ENCODE measurements at regions of chrX and their contacts with region 1.

Region 1: DNA sequence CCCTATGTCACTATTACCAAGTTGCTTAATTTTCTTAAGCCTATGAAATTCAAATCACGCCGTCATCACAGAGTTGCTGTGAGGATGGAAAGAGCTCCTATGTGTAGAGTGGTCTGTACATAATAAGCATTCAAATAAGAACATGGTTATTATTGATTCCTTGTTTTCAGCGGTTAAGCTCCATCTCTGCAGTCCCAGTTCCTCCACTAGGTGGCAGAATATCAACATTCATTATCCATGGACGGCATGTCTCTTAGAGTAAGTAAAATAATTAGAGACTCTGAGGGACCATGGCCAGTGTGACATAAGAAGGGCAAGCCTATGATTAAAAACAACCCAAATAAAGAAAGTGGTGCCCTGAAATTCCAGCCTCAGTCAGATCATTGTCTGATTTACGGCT is 132.5 kb upstream of the NHS start:
- DNase-seq: no peak
- H3K4me3 ChIP-seq: no peak overlapping the region
- H3K27ac ChIP-seq: no peak overlapping the region
- H3K4me1 ChIP-seq: no peaks in the 10 kb centered on the region
- H3K27me3 ChIP-seq: no peaks in the 10 kb centered on the region
- CTCF ChIP-seq: peak; percentile 75

Region 2: GRCh38 chrX:17405225-17405969 is 162.9 kb after region 1 on chrX:
- intact Hi-C with region 1: no loop called
- DNase-seq: no peak
- H3K4me3 ChIP-seq: no peak overlapping the region
- H3K27ac ChIP-seq: no peak overlapping the region
- H3K4me1 ChIP-seq: peaks cover 9% of the 10 kb centered on the region
- H3K27me3 ChIP-seq: no peaks in the 10 kb centered on the region
- CTCF ChIP-seq: no peak

Region 3: GRCh38 chrX:17689971-17690409 is 447.5 kb after region 1 on chrX:
- intact Hi-C with region 1: loop called (anchors 5 kb)
- DNase-seq: no peak
- H3K4me3 ChIP-seq: no peak overlapping the region
- H3K27ac ChIP-seq: no peak overlapping the region
- H3K4me1 ChIP-seq: peaks cover 4% of the 10 kb centered on the region
- H3K27me3 ChIP-seq: no peaks in the 10 kb centered on the region
- CTCF ChIP-seq: peak; percentile 75

Measured in left ventricle myocardium inferior (tissue), 1 donor.